ENCODE measurements at regions of chr2 and their contacts with region 1.

Region 1: GRCh38 chr2:19651466-19651865 is 250.3 kb downstream of the TTC32 start:
- DNase-seq: no peak
- ATAC-seq: no peak
- H3K4me3 ChIP-seq: no peak overlapping the region
- H3K27ac ChIP-seq: peak overlapping the region; percentile 4 to 57; a peak in 2 of 6 replicates
- H3K4me1 ChIP-seq: peaks cover 27% of the 10 kb centered on the region
- CTCF ChIP-seq: no peak
- EP300 ChIP-seq: no peak
- POLR2A ChIP-seq: no peak
- RAD21 ChIP-seq: no peak

Region 2: DNA sequence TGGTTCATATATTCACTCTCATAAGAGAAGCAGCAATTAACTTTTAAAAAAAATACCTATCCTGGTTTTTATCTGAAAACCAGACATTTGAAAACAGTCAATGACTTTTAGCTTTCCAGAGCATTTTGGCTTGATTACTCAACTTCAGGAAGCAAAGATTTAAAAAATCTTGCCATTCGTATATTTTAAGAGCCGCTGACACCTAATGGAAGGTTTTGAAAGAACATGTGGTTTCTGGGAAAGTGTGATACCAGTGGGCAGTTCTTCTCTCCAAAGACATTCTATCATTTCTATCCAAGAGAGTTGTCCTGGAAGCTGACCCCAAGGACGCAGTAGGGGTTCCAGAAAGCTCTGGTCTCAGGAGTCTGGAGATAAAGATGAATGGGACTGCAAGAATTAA is 15.6 kb after region 1 on chr2:
- CTCF ChIA-PET with region 1: interaction called, 16 read pairs
- POLR2A ChIA-PET with region 1: no interaction called
- DNase-seq: peak; percentile 40 to 64
- ATAC-seq: peak; percentile 63 to 82; a peak in 5 of 6 replicates
- H3K4me3 ChIP-seq: no peak overlapping the region
- H3K27ac ChIP-seq: peak overlapping the region; percentile 34 to 53; a peak in 5 of 6 replicates
- H3K4me1 ChIP-seq: peaks cover 14% of the 10 kb centered on the region; the same call in 2 of the 3 replicates
- CTCF ChIP-seq: peak; percentile 76
- EP300 ChIP-seq: no peak
- POLR2A ChIP-seq: no peak
- RAD21 ChIP-seq: peak; percentile 80 to 93

Measured in A549 (cell line).